ENCODE measurements at regions of chr20 and their contacts with region 1.

Region 1: GRCh38 chr20:45436732-45437391 is 20.9 kb downstream of the PIGT start:
- DNase-seq: peak; percentile 77 to 93 (median 84)
- ATAC-seq: peak; percentile 99
- H3K4me3 ChIP-seq: peak overlapping the region; percentile 54
- H3K4me3 Mint-ChIP-seq: peak overlapping the region; percentile 86
- H3K27ac ChIP-seq: no peak overlapping the region
- H3K27ac Mint-ChIP-seq: no peak overlapping the region
- H3K4me1 ChIP-seq: peaks cover 9% of the 10 kb centered on the region
- H3K4me1 Mint-ChIP-seq: peaks cover 7% of the 10 kb centered on the region
- H3K27me3 ChIP-seq: no peaks in the 10 kb centered on the region
- H3K27me3 Mint-ChIP-seq: no peaks in the 10 kb centered on the region
- CTCF ChIP-seq: peak; percentile 97

Region 2: DNA sequence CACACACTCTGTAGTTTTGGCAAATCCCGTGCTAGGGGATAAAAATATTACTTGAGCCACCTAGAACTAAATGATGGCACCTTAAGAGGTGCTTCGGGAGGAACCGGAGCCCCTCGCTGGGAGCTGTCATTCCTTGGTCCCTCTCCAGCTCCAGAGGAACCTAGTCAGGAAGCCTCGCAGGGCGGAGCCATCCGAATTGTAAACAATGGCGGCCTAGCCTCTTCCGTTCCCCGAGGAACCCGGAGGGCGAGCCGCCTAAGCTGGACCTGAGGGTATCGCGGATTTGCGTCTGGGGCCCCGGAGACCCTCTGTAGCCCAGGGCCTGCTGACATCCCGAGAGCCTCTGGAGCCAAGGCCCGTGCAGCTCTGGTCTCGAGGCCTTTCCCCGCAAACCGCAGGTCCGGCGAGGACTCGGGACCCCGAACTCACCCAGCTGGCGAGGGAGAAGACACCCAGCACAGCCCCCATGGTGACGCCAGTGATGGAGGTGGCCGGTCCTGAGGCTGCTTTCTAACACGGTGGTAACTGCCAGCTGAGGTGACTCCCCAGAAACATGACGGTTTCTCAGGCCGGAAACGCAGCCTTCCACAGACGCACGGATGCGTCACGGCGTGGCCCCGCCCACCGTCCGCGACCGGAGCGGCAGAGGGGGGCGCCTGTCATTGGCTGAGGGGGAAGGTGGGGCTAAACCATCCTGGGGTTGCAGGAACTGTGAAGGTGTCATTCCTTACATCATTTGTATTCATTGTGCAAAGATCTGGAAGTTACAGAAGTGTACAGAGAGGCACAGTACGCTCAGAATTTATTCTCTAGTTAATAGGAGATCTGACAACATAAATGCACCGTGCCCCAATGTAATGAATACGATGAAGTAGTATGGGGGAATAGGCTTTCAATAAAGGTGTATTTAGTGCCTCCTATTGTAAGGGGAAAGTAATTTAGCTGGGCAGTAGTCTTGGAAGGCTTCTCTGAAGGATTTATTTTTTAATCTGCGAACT is 915.1 kb before region 1 on chr20 and contains the start of gene SERINC3:
- CTCF ChIA-PET with region 1: no interaction called
- POLR2A ChIA-PET with region 1: no interaction called
- intact Hi-C with region 1: no loop called
- DNase-seq: peak; percentile 90 to 99 (median 97)
- ATAC-seq: peak; percentile 93
- H3K4me3 ChIP-seq: peak within 1 kb of the TSS; percentile 98
- H3K4me3 Mint-ChIP-seq: peak within 1 kb of the TSS; percentile 89
- H3K27ac ChIP-seq: peak within 1 kb of the TSS; percentile 95 to 99
- H3K27ac Mint-ChIP-seq: peak within 1 kb of the TSS; percentile 93
- H3K4me1 ChIP-seq: peaks cover 44% of the 10 kb centered on the region
- H3K4me1 Mint-ChIP-seq: peaks cover 58% of the 10 kb centered on the region
- H3K27me3 ChIP-seq: no peaks in the 10 kb centered on the region
- H3K27me3 Mint-ChIP-seq: no peaks in the 10 kb centered on the region
- CTCF ChIP-seq: peak; percentile 46
- total RNA-seq, gene SERINC3: 39.5 to 40.2 TPM

Region 3: GRCh38 chr20:45320948-45321595 is 115.8 kb before region 1 on chr20:
- CTCF ChIA-PET with region 1: interaction called, 31 read pairs
- POLR2A ChIA-PET with region 1: interaction called, 3 read pairs
- intact Hi-C with region 1: loop called (anchors 1 kb)
- DNase-seq: peak in 4 of 14 experiments; percentile 10 to 63 (median 56)
- ATAC-seq: peak; percentile 73
- H3K4me3 ChIP-seq: no peak overlapping the region
- H3K4me3 Mint-ChIP-seq: no peak overlapping the region
- H3K27ac ChIP-seq: no peak overlapping the region
- H3K27ac Mint-ChIP-seq: peak overlapping the region; percentile 17
- H3K4me1 ChIP-seq: peaks cover 31% of the 10 kb centered on the region
- H3K4me1 Mint-ChIP-seq: peaks cover 21% of the 10 kb centered on the region
- H3K27me3 ChIP-seq: peaks cover 0 to 3% of the 10 kb centered on the region in 2 experiments
- H3K27me3 Mint-ChIP-seq: peaks cover 10% of the 10 kb centered on the region
- CTCF ChIP-seq: no peak

Region 4: GRCh38 chr20:45362804-45363610 is 73.9 kb before region 1 on chr20 and contains the start of gene SYS1:
- CTCF ChIA-PET with region 1: interaction called, 116 read pairs
- POLR2A ChIA-PET with region 1: interaction called, 77 read pairs
- intact Hi-C with region 1: loop called (anchors 1 kb)
- DNase-seq: peak; percentile 97 to 100 (median 99)
- ATAC-seq: peak; percentile 86
- H3K4me3 ChIP-seq: peak within 1 kb of the TSS; percentile 96
- H3K4me3 Mint-ChIP-seq: peak within 1 kb of the TSS; percentile 91
- H3K27ac ChIP-seq: peak within 1 kb of the TSS; percentile 98 to 99
- H3K27ac Mint-ChIP-seq: peak within 1 kb of the TSS; percentile 85
- H3K4me1 ChIP-seq: peaks cover 55% of the 10 kb centered on the region
- H3K4me1 Mint-ChIP-seq: peaks cover 46% of the 10 kb centered on the region
- H3K27me3 ChIP-seq: no peaks in the 10 kb centered on the region
- H3K27me3 Mint-ChIP-seq: no peaks in the 10 kb centered on the region
- CTCF ChIP-seq: peak; percentile 92
- total RNA-seq, gene SYS1: 94.8 to 107 TPM

Region 5: GRCh38 chr20:45368221-45368980 is 68.5 kb before region 1 on chr20:
- CTCF ChIA-PET with region 1: interaction called, 132 read pairs
- POLR2A ChIA-PET with region 1: interaction called, 89 read pairs
- intact Hi-C with region 1: loop called in 1 of 2 experiments (anchors 1 kb)
- DNase-seq: peak in 8 of 14 experiments; percentile 10 to 82 (median 40)
- ATAC-seq: peak; percentile 71
- H3K4me3 ChIP-seq: no peak overlapping the region
- H3K4me3 Mint-ChIP-seq: peak overlapping the region; percentile 55
- H3K27ac ChIP-seq: peak overlapping the region in 1 of 2 donors; percentile 38
- H3K27ac Mint-ChIP-seq: peak overlapping the region; percentile 73
- H3K4me1 ChIP-seq: peaks cover 68% of the 10 kb centered on the region
- H3K4me1 Mint-ChIP-seq: peaks cover 80% of the 10 kb centered on the region
- H3K27me3 ChIP-seq: no peaks in the 10 kb centered on the region
- H3K27me3 Mint-ChIP-seq: no peaks in the 10 kb centered on the region
- CTCF ChIP-seq: no peak

Region 6: DNA sequence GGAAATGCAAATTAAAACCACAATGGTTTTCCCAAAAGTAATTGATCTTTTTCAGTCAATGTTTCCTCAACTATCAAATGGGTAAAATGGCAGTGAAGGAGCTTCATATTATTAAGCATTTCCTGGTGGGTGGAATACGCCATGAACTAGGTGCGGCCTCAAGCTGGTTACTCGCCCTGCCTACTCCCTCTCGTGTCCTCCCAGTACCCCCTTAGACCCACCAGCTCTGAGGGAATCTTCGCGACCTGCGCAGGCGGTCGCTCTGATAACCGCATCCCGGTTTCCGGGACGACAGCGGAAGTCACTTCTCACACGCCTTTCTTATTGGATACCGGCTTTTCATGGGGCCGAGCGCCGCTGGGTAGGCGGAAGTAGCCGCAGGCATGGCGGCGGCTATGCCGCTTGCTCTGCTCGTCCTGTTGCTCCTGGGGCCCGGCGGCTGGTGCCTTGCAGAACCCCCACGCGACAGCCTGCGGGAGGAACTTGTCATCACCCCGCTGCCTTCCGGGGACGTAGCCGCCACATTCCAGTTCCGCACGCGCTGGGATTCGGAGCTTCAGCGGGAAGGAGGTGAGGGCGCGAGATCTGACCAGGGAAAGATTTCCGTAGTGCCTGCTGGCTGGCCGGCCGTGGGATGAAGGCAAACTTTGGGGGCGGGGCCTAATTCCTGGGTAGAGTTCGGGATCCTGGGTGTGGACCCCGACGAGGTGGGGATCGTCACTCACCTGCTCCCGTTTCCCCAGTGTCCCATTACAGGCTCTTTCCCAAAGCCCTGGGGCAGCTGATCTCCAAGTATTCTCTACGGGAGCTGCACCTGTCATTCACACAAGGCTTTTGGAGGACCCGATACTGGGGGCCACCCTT is 20.9 kb before region 1 on chr20 and contains the start of gene PIGT:
- CTCF ChIA-PET with region 1: interaction called, 31 read pairs
- POLR2A ChIA-PET with region 1: interaction called, 20 read pairs
- intact Hi-C with region 1: loop called in 1 of 2 experiments (anchors 2 kb)
- DNase-seq: peak; percentile 75 to 97 (median 86)
- ATAC-seq: peak; percentile 95
- H3K4me3 ChIP-seq: peak within 1 kb of the TSS; percentile 98
- H3K4me3 Mint-ChIP-seq: peak within 1 kb of the TSS; percentile 95
- H3K27ac ChIP-seq: peak within 1 kb of the TSS; percentile 81 to 88
- H3K27ac Mint-ChIP-seq: peak within 1 kb of the TSS; percentile 92
- H3K4me1 ChIP-seq: peaks cover 31% of the 10 kb centered on the region
- H3K4me1 Mint-ChIP-seq: peaks cover 49% of the 10 kb centered on the region
- H3K27me3 ChIP-seq: no peaks in the 10 kb centered on the region
- H3K27me3 Mint-ChIP-seq: no peaks in the 10 kb centered on the region
- CTCF ChIP-seq: no peak
- total RNA-seq, gene PIGT: 157 to 163 TPM

Region 7: GRCh38 chr20:45765980-45766379 is 329.1 kb after region 1 on chr20:
- CTCF ChIA-PET with region 1: interaction called, 13 read pairs
- POLR2A ChIA-PET with region 1: interaction called, 3 read pairs
- intact Hi-C with region 1: loop called in 1 of 2 experiments (anchors 5 kb)
- DNase-seq: no peak
- ATAC-seq: no peak
- H3K4me3 ChIP-seq: no peak overlapping the region
- H3K4me3 Mint-ChIP-seq: no peak overlapping the region
- H3K27ac ChIP-seq: no peak overlapping the region
- H3K27ac Mint-ChIP-seq: no peak overlapping the region
- H3K4me1 ChIP-seq: peaks cover 2% of the 10 kb centered on the region
- H3K4me1 Mint-ChIP-seq: peaks cover 2% of the 10 kb centered on the region
- H3K27me3 ChIP-seq: no peaks in the 10 kb centered on the region
- H3K27me3 Mint-ChIP-seq: peaks cover 5% of the 10 kb centered on the region
- CTCF ChIP-seq: no peak